ENCODE measurements at regions of chr5 and their contacts with region 1.

Region 1: DNA sequence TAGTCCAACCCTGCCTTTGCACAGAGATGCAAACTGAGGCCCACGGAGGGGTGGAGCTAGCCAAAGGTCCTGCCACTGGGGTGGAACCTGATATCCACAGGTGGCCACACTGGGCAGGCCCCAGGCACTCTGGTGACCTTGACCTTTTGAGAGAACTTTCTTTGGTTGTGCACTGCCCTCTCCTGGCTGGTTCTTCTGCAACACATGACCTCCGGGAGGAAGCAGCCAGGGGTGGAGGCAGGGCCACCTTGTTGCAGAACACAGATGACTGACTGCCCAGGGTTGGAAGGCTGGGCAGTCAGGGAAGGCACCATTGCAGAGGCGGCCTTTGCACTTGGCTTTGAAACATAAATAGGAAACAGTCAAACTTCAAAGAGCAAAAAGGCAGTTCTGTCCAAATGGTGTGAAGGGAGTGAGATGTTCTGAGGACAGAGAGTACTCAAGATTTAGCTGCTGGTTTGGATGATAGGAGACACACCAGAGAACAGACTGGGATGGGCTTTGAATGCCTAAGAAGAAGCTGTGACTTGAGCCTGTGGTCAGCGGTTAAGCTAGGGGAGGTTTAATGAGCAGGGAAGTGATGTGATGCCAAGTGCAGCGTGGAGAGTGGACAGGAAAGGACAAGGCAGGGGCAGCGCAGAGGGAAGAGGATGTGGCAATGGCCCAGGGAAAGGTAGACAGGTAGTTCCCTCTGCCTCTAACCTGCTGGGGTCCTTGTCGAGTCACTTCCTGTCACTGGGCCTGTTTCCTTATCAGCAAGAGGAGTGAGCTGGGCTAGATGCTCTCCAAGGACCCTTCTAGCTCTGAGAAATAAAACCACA is 6.8 kb upstream of the TCOF1 start:
- DNase-seq: peak; percentile 23
- H3K4me3 ChIP-seq: no peak overlapping the region
- H3K27ac ChIP-seq: no peak overlapping the region
- H3K4me1 ChIP-seq: no peaks in the 10 kb centered on the region
- H3K27me3 ChIP-seq: no peaks in the 10 kb centered on the region
- CTCF ChIP-seq: peak; percentile 22 to 61 (median 39)
- POLR2A ChIP-seq: no peak

Region 2: DNA sequence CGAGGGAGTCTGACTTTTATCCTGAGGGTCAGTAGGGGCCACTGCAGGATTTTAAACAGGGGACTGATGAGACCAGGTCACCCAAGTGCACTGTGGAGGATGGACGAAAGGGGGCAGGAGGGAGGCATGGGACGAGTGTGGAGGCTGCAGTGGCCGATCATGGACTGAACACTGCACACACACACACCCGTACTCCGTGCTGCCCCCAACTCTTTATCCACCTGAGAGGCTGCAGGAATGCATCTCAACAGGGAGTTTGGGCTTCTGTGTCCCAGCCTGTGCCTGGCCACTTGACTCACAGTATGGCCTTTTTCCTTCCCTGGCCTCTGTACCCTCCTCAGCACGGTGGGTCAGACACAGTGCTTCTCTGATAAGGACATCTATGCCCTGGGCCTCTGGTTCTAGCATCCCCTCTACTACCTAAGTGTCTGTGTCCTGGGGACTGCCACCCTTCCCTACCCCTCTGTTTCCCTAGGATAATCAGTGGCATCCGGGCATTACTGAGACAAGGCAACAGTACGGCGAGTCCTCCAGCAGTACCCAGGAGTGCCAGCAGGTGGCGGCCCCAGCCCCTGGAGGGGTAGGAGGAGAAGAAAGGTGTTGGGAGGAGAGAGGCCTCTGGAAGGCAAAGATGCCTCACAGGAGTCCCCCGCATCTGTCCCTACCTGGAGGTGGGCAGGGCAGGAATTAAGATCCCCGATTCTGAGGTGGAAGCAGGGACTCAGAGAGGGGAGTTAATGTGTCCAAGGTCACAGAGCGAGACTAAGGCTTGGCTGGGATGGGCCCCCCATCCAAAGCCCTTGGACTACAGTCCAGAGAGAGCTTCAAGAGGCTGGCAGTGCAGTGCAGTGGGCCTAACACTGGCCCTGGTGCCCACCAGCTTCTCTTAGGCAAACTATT is 189.2 kb before region 1 on chr5:
- intact Hi-C with region 1: loop called (anchors 5 kb)
- DNase-seq: peak; percentile 52
- H3K4me3 ChIP-seq: no peak overlapping the region
- H3K27ac ChIP-seq: peak overlapping the region in 1 of 2 donors; percentile 42
- H3K4me1 ChIP-seq: peaks cover 3% of the 10 kb centered on the region
- H3K27me3 ChIP-seq: no peaks in the 10 kb centered on the region
- CTCF ChIP-seq: peak; percentile 55 to 91 (median 88)
- POLR2A ChIP-seq: no peak

Region 3: DNA sequence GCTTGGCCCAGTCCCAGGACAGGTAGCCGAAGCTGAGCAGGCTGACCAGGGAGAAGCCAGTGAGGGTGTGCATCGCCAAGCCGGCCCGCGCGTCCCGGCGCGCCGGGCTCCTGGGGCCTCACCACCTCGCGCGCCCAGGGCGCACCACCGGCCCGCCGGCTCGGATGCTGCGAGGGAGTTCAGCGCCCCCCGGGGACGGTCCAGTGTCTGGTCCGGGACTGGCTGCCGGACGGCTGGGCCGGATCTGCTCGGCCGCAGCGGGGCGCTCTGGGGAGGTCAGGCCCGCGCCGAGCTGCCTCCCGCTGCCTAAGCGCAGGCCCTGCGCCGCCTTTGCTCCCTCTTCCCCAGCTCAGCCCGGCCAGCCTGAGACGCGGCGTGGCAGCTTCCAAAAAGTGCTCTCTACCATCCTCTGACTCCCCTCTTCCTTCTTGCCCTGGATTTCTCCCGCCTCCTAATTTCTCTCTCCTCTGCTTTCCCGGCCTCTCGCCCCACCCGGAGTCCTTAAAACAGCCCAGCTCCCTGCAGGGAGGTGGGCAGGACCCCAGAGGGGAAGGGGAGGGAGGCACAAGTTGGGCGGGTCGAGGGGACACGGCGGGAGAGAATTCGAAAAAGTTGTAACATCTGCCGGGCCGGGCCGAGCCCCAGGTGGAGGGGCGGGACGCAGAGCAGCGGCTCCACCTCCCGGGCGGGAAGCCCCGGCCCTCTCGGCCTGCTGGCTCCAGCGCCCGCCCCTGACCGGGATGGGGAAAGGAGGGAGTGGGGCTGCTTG is 48.2 kb before region 1 on chr5 and contains the start of gene ARSI:
- intact Hi-C with region 1: loop called (anchors 5 kb)
- DNase-seq: no peak
- H3K4me3 ChIP-seq: peak within 1 kb of the TSS; percentile 17 to 22
- H3K27ac ChIP-seq: peak within 1 kb of the TSS in 1 of 2 donors; percentile 60
- H3K4me1 ChIP-seq: peaks cover 6% of the 10 kb centered on the region
- H3K27me3 ChIP-seq: no peaks in the 10 kb centered on the region
- CTCF ChIP-seq: no peak
- POLR2A ChIP-seq: no peak
- total RNA-seq, gene ARSI: 1.5 to 1.6 TPM

Measured in prostate gland (tissue), 2 donors.